H1 (cell line): ENCODE measurements at regions of chr1 and their contacts with region 1.

Region 1: DNA sequence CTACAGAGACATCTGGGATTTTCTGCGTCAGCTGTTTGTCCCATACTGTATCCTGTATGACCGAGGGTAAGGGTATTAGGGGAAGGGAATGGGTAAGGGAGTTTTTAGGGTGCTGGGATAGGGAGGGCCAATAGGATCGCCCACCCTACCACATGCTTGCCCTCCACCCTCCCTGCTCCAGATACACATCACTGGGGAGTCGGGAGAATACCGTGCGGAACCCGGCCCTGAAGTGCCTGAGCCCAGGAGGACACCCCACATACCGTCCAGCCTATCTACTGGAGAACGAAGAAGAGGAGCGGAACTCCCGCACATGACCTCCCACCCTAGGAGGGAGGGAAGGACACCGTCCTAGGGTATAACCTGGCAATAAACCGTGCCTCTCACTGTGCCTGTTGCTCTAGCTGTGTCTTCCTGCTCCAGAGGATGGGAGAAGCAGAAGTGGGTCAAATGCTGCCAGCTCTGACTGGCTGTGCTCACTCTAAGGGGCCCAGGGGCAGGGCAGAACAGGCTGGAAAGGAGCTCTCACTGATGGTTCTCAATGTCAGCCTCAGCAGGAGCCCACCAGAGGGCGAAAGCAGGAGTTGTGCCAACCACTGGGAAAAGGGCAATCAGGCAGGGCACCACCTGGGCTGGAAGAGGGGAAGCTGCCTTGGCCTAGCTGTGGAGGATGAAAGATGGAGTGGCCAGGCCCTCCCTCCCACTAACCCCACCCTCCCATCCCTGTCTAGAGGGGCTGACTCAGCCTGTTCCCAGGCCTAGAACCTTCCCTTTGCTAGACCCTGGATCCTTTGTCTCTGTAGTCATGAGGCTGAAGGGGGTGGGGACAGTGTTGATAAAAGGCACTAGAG is 440 bp upstream of the LENEP start:
- DNase-seq: peak in 1 of 2 experiments; percentile 58
- H3K4me3 ChIP-seq: no peak overlapping the region
- H3K27ac ChIP-seq: peak overlapping the region; percentile 58; the same call in 1 of the 2 replicates
- H3K4me1 ChIP-seq: peaks cover 0 to 7% (median 3%) of the 10 kb centered on the region in 4 experiments; a peak in 3 of 7 replicates
- H3K27me3 ChIP-seq: no peaks in the 10 kb centered on the region
- CTCF ChIP-seq: peak; percentile 45 to 51 (median 48)
- EP300 ChIP-seq: no peak
- POLR2A ChIP-seq: peak; percentile 51 to 61
- RAD21 ChIP-seq: peak; percentile 12 to 33; a peak in 2 of 4 replicates

Region 2: DNA sequence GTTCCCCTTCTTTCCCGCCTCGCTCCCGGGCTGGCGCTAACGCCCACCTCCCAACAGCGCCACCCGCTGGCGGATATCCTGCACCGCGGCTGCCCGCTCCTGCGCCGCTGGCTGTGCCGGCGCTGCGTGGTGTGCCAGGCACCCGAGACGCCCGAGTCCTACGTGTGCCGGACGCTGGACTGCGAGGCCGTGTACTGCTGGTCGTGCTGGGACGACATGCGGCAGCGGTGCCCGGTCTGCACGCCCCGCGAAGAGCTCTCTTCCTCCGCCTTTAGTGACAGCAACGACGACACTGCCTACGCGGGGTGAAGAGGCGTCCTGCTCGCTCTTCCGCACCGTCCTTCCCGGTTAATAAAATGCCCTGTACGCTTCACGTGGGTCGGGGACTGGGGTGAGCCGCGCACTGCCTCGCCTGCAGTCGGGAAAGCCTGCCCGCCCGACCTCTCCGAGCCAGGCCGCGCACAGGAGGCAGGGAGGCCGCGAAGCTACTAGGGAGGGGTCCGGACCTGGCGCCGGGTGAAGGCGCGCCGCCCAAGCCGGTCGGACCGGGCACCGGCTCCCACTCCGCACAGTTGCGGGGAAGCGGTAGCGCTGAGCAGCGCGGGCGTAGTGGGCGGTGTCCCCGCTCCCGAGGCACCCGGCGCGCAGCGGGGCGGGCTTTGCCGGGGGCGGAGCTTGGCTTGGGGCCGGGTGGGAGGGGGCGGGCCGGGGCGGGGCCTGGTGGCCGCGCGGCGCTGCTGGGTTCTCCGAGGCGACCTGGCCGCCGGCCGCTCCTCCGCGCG is 57.8 kb after region 1 on chr1 and contains the start of gene ADAM15:
- CTCF ChIA-PET with region 1: interaction called, 112 read pairs
- POLR2A ChIA-PET with region 1: interaction called, 4 read pairs
- DNase-seq: peak in 1 of 2 experiments; percentile 95
- H3K4me3 ChIP-seq: peak within 1 kb of the TSS; percentile 32 to 76 (median 62)
- H3K27ac ChIP-seq: no peak within 1 kb of the TSS
- H3K4me1 ChIP-seq: peaks cover 4 to 28% (median 10%) of the 10 kb centered on the region in 4 experiments; a peak in 6 of 7 replicates
- H3K27me3 ChIP-seq: peaks cover 0 to 18% (median 12%) of the 10 kb centered on the region in 4 experiments; a peak in 5 of 7 replicates
- CTCF ChIP-seq: peak; percentile 94 to 98 (median 97)
- EP300 ChIP-seq: no peak
- POLR2A ChIP-seq: no peak
- RAD21 ChIP-seq: peak; percentile 51 to 65
- total RNA-seq, gene ADAM15: 32.2 and 32.9 TPM in 2 replicates

Region 3: DNA sequence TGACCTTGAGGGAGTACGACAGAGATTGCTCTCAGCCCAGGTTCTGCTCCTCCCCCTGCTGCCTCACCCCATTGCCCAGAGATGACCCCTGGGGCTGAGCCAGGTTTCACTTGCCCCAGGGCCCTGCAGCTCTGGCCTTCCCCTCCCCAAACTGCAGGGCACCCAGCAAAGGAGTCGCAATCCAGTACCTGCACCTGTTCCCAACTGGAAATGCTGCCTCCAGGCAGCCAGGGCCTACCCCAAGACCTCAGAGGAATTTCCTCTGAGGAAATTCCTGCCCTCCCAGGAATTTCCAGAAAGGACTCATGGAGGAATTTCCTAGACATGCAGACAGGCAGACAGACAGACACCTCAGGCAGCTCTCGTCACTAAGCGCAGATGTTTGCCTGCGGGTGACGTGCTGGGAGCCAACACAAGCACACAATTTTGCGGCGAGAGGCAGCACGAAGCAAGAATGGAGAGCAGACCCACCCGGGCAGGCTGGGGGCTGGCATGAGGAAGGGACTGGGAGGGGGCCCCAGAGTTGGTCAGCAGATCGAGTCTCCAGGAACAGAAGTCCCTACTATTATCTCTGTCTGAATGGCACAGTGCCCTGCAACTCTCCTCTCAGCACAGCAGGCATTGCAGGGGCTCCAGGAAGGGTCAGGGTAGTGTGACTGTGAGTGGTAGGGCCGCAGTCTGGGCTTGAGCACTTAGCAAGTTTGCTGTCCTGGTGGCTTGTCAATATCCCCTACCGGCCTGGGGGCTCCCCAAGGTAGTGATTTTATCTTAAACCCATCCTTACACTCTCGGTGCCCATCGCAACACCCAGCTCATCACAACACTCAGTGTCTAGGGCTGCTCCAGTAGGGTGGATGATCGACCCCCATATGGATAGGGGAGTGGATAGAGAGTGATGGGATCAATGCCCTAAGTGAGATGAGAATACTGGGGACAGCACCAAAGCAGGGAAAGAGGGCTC is 131.8 kb after region 1 on chr1:
- CTCF ChIA-PET with region 1: no interaction called
- POLR2A ChIA-PET with region 1: no interaction called
- DNase-seq: peak in 1 of 2 experiments; percentile 48
- H3K4me3 ChIP-seq: no peak overlapping the region
- H3K27ac ChIP-seq: no peak overlapping the region
- H3K4me1 ChIP-seq: peaks cover 16 to 46% (median 32%) of the 10 kb centered on the region in 4 experiments
- H3K27me3 ChIP-seq: peaks cover 33 to 50% (median 47%) of the 10 kb centered on the region in 4 experiments
- CTCF ChIP-seq: no peak
- EP300 ChIP-seq: no peak
- POLR2A ChIP-seq: no peak
- RAD21 ChIP-seq: no peak